ENCODE measurements at regions of chr3 and their contacts with region 1.

Region 1: DNA sequence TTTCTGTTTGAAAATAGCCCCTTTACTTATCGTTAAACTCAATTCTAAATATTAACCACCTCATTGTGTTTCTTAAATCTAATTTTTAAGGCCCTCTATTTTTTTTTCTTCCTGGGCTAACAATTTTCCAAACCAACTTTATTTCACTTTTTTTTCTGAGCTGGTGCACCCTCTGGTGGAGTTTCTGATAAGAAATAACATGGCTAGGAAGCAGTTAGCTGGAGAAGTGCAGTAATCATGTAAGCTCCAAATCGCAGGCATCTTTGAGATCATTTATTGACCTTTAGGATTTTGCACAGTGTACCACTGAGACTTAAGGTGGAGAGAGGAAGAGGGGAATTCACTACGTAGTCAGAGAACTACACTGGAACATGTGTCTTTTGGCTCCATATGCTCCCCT is 6.4 kb downstream of the TMEM207 start:
- DNase-seq: peak; percentile 29
- H3K4me3 ChIP-seq: no peak overlapping the region
- H3K27ac ChIP-seq: no peak overlapping the region
- H3K4me1 ChIP-seq: peaks cover 4% of the 10 kb centered on the region
- H3K27me3 ChIP-seq: peaks cover 4% of the 10 kb centered on the region in 2 experiments
- CTCF ChIP-seq: peak in 1 of 2 donors; percentile 10
- POLR2A ChIP-seq: no peak

Region 2: GRCh38 chr3:189849262-189849661 is 594.0 kb before region 1 on chr3:
- CTCF ChIA-PET with region 1: no interaction called
- POLR2A ChIA-PET with region 1: no interaction called
- dilution Hi-C with region 1: no loop called
- intact Hi-C with region 1: no loop called
- DNase-seq: no peak
- H3K4me3 ChIP-seq: no peak overlapping the region
- H3K27ac ChIP-seq: no peak overlapping the region
- H3K4me1 ChIP-seq: no peaks in the 10 kb centered on the region
- H3K27me3 ChIP-seq: no peaks in the 10 kb centered on the region
- CTCF ChIP-seq: no peak
- POLR2A ChIP-seq: no peak

Region 3: DNA sequence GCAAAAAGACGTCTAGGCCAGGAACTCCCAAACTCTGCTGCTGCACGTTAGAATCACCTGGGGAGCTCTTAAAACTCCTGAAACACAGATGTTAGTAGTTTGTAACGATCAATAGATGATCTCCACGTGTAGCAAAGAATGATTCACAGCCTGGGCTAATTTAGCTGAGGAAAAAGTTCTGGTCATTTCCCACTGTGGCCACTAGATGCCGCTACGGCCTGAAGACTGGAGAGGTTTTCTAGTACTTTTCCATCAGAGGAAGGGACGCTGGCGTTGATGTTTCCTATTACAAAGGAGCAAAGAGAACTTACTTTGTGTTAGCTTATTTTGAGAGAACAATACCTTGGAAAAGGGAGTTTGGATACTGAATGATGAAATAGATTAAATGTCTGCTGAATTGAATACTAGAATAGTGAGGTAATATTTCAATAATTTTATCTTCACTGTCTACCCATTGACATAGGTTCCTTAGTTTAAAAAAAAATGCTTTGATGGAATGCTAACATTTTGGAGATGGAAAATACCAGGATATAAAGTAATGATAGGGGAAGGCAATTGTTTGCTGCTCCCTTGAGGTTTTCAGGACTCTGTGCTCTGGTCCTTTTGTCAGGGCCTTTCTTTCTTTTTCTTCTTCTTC is 481.6 kb before region 1 on chr3:
- CTCF ChIA-PET with region 1: interaction called, 26 read pairs
- POLR2A ChIA-PET with region 1: no interaction called
- dilution Hi-C with region 1: no loop called
- intact Hi-C with region 1: loop called (anchors 5 kb)
- DNase-seq: peak; percentile 89
- H3K4me3 ChIP-seq: no peak overlapping the region
- H3K27ac ChIP-seq: no peak overlapping the region
- H3K4me1 ChIP-seq: no peaks in the 10 kb centered on the region
- H3K27me3 ChIP-seq: no peaks in the 10 kb centered on the region
- CTCF ChIP-seq: peak; percentile 77 to 90
- POLR2A ChIP-seq: no peak

Region 4: DNA sequence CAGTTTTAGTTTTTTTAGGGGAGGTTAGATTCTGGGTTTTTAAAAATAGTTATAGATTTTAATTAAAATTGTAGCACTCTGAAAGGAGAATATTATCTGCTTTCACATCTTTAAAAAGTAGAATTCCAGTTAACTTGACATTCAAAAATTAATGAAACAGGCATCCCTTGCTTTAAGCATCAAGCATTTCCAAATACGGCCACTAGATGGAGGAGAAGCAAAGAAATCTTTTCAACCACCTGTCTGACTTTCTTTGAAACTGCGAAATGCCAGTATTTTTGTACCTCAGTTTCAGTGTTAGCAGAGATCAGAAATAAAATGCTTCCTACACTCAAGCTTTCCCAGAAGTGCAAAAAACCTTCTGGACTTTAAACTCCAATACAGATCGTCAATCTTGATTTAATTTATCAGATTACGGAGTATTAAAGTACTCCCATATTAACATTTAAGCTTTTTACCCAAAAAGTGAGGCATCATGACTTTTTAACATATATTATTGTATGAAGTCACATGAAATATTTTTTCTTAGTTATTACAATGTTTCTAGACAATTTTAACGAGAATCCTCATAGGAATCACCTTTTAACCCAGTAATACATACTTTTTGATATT is 475.9 kb before region 1 on chr3:
- CTCF ChIA-PET with region 1: interaction called, 22 read pairs
- POLR2A ChIA-PET with region 1: no interaction called
- dilution Hi-C with region 1: no loop called
- intact Hi-C with region 1: loop called (anchors 5 kb)
- DNase-seq: peak; percentile 71
- H3K4me3 ChIP-seq: no peak overlapping the region
- H3K27ac ChIP-seq: no peak overlapping the region
- H3K4me1 ChIP-seq: no peaks in the 10 kb centered on the region
- H3K27me3 ChIP-seq: no peaks in the 10 kb centered on the region
- CTCF ChIP-seq: peak; percentile 58 to 63
- POLR2A ChIP-seq: no peak

Region 5: GRCh38 chr3:190224863-190225692 is 218.2 kb before region 1 on chr3:
- CTCF ChIA-PET with region 1: interaction called, 36 read pairs
- POLR2A ChIA-PET with region 1: no interaction called
- dilution Hi-C with region 1: no loop called
- intact Hi-C with region 1: no loop called
- DNase-seq: peak; percentile 58
- H3K4me3 ChIP-seq: no peak overlapping the region
- H3K27ac ChIP-seq: no peak overlapping the region
- H3K4me1 ChIP-seq: peaks cover 10% of the 10 kb centered on the region
- H3K27me3 ChIP-seq: no peaks in the 10 kb centered on the region
- CTCF ChIP-seq: peak; percentile 20 to 24
- POLR2A ChIP-seq: no peak

Region 6: GRCh38 chr3:190458040-190458439 is 14.8 kb after region 1 on chr3:
- CTCF ChIA-PET with region 1: interaction called, 10 read pairs
- POLR2A ChIA-PET with region 1: no interaction called
- dilution Hi-C with region 1: no loop called
- intact Hi-C with region 1: no loop called
- DNase-seq: no peak
- H3K4me3 ChIP-seq: no peak overlapping the region
- H3K27ac ChIP-seq: no peak overlapping the region
- H3K4me1 ChIP-seq: no peaks in the 10 kb centered on the region
- H3K27me3 ChIP-seq: peaks cover 4 to 14% of the 10 kb centered on the region in 2 experiments
- CTCF ChIP-seq: no peak
- POLR2A ChIP-seq: no peak

Region 7: DNA sequence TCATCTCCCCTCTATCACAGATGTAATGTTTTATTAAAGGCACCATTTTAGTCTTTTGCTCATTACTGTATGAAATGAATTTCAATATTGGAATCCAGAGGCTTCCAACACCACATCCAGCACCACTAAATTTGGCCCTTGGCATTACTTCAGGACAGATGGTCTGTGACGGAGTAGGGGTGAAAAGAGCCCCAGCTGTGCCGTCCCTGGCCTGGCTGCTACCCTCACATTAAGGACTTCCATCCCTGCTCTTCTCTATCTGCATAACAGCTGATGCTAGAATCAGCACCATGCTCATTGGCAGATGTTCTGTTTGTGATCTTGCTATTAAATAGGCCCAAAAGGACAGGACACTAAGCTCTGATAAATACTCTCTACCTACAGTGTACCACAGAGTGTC is 223.6 kb after region 1 on chr3:
- CTCF ChIA-PET with region 1: no interaction called
- POLR2A ChIA-PET with region 1: no interaction called
- dilution Hi-C with region 1: no loop called
- intact Hi-C with region 1: loop called (anchors 1 kb)
- DNase-seq: no peak
- H3K4me3 ChIP-seq: no peak overlapping the region
- H3K27ac ChIP-seq: no peak overlapping the region
- H3K4me1 ChIP-seq: no peaks in the 10 kb centered on the region
- H3K27me3 ChIP-seq: no peaks in the 10 kb centered on the region
- CTCF ChIP-seq: no peak
- POLR2A ChIP-seq: no peak

Region 8: DNA sequence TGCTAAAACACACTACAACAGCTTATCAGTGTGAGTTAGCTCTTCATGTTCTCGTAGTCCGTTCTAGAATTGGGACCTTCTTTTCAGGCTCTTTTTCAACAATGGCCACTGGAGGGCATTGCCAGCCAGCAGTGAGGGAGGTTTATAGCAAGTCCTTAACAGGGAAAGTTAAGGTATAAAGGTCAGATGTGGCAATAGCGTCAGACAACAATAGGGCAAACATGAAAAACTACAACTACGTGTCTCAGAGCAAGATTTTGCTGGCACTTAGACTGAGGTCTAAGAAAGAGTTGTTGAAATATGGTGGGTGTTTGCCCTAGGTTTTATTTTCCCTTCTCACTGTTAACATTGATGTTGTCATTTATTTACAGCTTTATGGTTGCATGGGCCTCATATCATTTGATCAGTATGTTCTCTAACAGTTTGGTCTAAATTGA is 257.9 kb after region 1 on chr3:
- CTCF ChIA-PET with region 1: interaction called, 12 read pairs
- POLR2A ChIA-PET with region 1: no interaction called
- dilution Hi-C with region 1: no loop called
- intact Hi-C with region 1: no loop called
- DNase-seq: peak; percentile 37
- H3K4me3 ChIP-seq: no peak overlapping the region
- H3K27ac ChIP-seq: no peak overlapping the region
- H3K4me1 ChIP-seq: no peaks in the 10 kb centered on the region
- H3K27me3 ChIP-seq: peaks cover 0 to 2% of the 10 kb centered on the region in 2 experiments
- CTCF ChIP-seq: peak; percentile 24 to 46
- POLR2A ChIP-seq: no peak

Region 9: DNA sequence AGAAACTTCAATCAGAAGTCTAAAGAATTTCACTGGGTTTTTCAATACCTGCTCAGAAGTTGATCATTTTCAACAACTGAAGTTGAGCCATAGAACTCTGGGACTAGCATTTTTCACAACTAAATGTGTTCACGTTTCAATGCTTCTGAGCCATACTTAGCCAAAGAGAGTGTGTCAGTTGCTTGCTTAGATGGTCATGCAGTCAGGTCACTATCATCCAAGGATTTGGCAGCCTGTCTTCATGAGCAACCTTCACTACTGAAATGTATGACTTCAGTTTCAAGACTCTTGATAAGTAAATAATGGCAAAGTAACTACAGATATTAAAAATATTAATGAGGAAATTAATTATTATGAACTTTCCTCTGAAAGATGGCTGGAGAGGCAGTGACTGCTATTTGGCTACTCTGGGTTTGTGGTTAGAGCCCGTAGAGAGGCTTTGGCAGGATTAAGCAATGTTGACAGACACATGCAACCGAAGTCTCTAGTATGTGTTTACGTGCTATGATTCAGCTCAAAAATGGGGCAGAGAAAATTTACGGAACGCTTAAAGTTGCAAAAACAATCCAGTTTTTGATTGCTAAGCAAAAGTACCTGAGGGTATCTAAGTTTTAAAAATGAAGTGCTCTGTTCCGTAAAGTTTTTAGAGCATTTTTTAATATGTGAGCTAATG is 285.5 kb after region 1 on chr3:
- CTCF ChIA-PET with region 1: no interaction called
- POLR2A ChIA-PET with region 1: no interaction called
- dilution Hi-C with region 1: no loop called
- intact Hi-C with region 1: no loop called
- DNase-seq: no peak
- H3K4me3 ChIP-seq: no peak overlapping the region
- H3K27ac ChIP-seq: no peak overlapping the region
- H3K4me1 ChIP-seq: no peaks in the 10 kb centered on the region
- H3K27me3 ChIP-seq: no peaks in the 10 kb centered on the region
- CTCF ChIP-seq: no peak
- POLR2A ChIP-seq: no peak